HCT116 (cell line): ENCODE measurements at regions of chr5 and their contacts with region 1.

Region 1: GRCh38 chr5:68652534-68652965 is 437.0 kb downstream of the PIK3R1 start:
- DNase-seq: no peak
- ATAC-seq: no peak
- H3K4me3 ChIP-seq: no peak overlapping the region
- H3K27ac ChIP-seq: no peak overlapping the region
- H3K4me1 ChIP-seq: peaks cover 0 to 6% of the 10 kb centered on the region in 2 experiments; a peak in 1 of 4 replicates
- H3K27me3 ChIP-seq: no peaks in the 10 kb centered on the region
- CTCF ChIP-seq: no peak
- POLR2A ChIP-seq: no peak
- RAD21 ChIP-seq: no peak

Region 2: GRCh38 chr5:68460147-68460798 is 192.3 kb before region 1 on chr5:
- CTCF ChIA-PET with region 1: no interaction called
- POLR2A ChIA-PET with region 1: no interaction called
- RAD21 ChIA-PET with region 1: no interaction called
- intact Hi-C with region 1: no loop called
- DNase-seq: peak; percentile 60
- ATAC-seq: peak; percentile 82
- H3K4me3 ChIP-seq: no peak overlapping the region
- H3K27ac ChIP-seq: no peak overlapping the region
- H3K4me1 ChIP-seq: peaks cover 3 to 23% of the 10 kb centered on the region in 2 experiments; a peak in 2 of 4 replicates
- H3K27me3 ChIP-seq: no peaks in the 10 kb centered on the region
- CTCF ChIP-seq: peak; percentile 67 to 78 (median 67); a peak in 5 of 6 replicates
- POLR2A ChIP-seq: no peak
- RAD21 ChIP-seq: peak; percentile 83

Region 3: GRCh38 chr5:68949256-68949655 is 296.7 kb after region 1 on chr5:
- CTCF ChIA-PET with region 1: no interaction called
- POLR2A ChIA-PET with region 1: no interaction called
- RAD21 ChIA-PET with region 1: no interaction called
- intact Hi-C with region 1: loop called (anchors 10 kb)
- DNase-seq: no peak
- ATAC-seq: no peak
- H3K4me3 ChIP-seq: no peak overlapping the region
- H3K27ac ChIP-seq: no peak overlapping the region
- H3K4me1 ChIP-seq: no peaks in the 10 kb centered on the region
- H3K27me3 ChIP-seq: peaks cover 26% of the 10 kb centered on the region; the same call in 1 of the 2 replicates
- CTCF ChIP-seq: no peak
- POLR2A ChIP-seq: no peak
- RAD21 ChIP-seq: no peak

Region 4: GRCh38 chr5:69166686-69167492 is 514.3 kb after region 1 on chr5 and contains the start of gene CCNB1:
- CTCF ChIA-PET with region 1: no interaction called
- POLR2A ChIA-PET with region 1: no interaction called
- RAD21 ChIA-PET with region 1: no interaction called
- intact Hi-C with region 1: no loop called
- DNase-seq: peak; percentile 96
- ATAC-seq: peak; percentile 98
- H3K4me3 ChIP-seq: peak within 1 kb of the TSS; percentile 87 to 98
- H3K27ac ChIP-seq: peak within 1 kb of the TSS; percentile 80
- H3K4me1 ChIP-seq: peaks cover 14 to 20% of the 10 kb centered on the region in 2 experiments
- H3K27me3 ChIP-seq: no peaks in the 10 kb centered on the region
- CTCF ChIP-seq: no peak
- POLR2A ChIP-seq: peak; percentile 82
- RAD21 ChIP-seq: no peak
- total RNA-seq, gene CCNB1: 281 TPM